Breast epithelium (tissue), 4 donors: ENCODE measurements at regions of chr20 and their contacts with region 1.

Region 1: GRCh38 chr20:53939572-53940359 is 130.6 kb downstream of the BCAS1 start:
- DNase-seq: peak; percentile 90 to 93
- H3K4me3 ChIP-seq: no peak overlapping the region
- H3K27ac ChIP-seq: peak overlapping the region; percentile 65 to 66
- H3K4me1 ChIP-seq: peaks cover 0 to 11% of the 10 kb centered on the region in 2 donors
- H3K27me3 ChIP-seq: no peaks in the 10 kb centered on the region
- CTCF ChIP-seq: peak; percentile 75 to 88 (median 80)
- POLR2A ChIP-seq: no peak

Region 2: GRCh38 chr20:53578492-53579222 is 361.1 kb before region 1 on chr20:
- intact Hi-C with region 1: loop called (anchors 10 kb)
- DNase-seq: peak in 1 of 2 donors; percentile 28
- H3K4me3 ChIP-seq: peak overlapping the region in 2 of 3 donors; percentile 24 to 40
- H3K27ac ChIP-seq: peak overlapping the region; percentile 79 to 84
- H3K4me1 ChIP-seq: peaks cover 0 to 26% of the 10 kb centered on the region in 2 donors
- H3K27me3 ChIP-seq: no peaks in the 10 kb centered on the region
- CTCF ChIP-seq: peak; percentile 99 to 100 (median 99)
- POLR2A ChIP-seq: no peak

Region 3: GRCh38 chr20:54103067-54103761 is 163.4 kb after region 1 on chr20:
- intact Hi-C with region 1: no loop called
- DNase-seq: peak in 1 of 2 donors; percentile 72
- H3K4me3 ChIP-seq: no peak overlapping the region
- H3K27ac ChIP-seq: no peak overlapping the region
- H3K4me1 ChIP-seq: no peaks in the 10 kb centered on the region
- H3K27me3 ChIP-seq: no peaks in the 10 kb centered on the region
- CTCF ChIP-seq: peak; percentile 51 to 62 (median 58)
- POLR2A ChIP-seq: no peak